RWPE1 (cell line): ENCODE measurements at regions of chr11 and their contacts with region 1.

Region 1: DNA sequence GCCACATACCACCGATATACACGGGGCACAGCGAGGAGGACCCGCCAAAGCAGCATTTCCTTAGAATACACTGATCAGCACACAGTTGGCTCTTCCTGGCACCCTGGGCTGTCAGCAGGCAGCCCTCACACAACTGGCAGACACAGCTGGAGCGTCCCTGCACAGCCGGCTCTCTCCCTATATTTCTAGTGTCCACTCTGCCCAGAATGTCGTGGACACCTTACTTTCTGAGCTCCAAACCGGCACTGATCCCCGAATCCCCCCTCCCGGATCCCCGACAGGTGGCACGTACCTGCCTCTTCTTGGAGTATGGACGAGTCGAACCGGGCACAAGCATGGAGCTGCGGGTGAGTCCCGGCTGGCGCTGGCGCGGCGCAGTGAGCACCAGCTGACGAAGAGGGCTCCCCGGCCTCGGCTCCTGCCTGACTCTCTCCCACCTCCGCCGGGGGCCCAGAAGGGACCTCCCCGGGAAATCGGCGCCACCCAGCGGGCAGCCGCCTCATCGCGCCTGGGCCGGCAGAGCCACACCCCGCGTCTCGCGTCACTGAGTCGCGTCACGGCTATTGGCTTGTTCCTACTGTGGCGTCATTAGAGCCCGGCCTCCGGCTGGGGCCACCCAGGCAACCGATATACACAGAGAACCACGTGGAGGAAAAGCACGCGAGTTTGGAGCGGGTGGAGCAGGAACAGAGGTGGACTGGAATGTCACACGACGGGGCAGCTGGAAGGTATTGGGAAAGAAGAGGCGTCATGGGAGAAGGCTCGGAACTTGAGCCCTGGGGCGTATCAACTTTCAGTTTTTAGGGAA is at the start of gene USP2:
- DNase-seq: peak; percentile 94
- H3K27ac ChIP-seq: peak within 1 kb of the TSS; percentile 53
- CTCF ChIP-seq: peak; percentile 96

Region 2: GRCh38 chr11:119356349-119357031 is 24.9 kb before region 1 on chr11:
- CTCF ChIA-PET with region 1: interaction called, 77 read pairs
- POLR2A ChIA-PET with region 1: no interaction called
- DNase-seq: no peak
- H3K27ac ChIP-seq: peak overlapping the region; percentile 75
- CTCF ChIP-seq: peak; percentile 96

Region 3: DNA sequence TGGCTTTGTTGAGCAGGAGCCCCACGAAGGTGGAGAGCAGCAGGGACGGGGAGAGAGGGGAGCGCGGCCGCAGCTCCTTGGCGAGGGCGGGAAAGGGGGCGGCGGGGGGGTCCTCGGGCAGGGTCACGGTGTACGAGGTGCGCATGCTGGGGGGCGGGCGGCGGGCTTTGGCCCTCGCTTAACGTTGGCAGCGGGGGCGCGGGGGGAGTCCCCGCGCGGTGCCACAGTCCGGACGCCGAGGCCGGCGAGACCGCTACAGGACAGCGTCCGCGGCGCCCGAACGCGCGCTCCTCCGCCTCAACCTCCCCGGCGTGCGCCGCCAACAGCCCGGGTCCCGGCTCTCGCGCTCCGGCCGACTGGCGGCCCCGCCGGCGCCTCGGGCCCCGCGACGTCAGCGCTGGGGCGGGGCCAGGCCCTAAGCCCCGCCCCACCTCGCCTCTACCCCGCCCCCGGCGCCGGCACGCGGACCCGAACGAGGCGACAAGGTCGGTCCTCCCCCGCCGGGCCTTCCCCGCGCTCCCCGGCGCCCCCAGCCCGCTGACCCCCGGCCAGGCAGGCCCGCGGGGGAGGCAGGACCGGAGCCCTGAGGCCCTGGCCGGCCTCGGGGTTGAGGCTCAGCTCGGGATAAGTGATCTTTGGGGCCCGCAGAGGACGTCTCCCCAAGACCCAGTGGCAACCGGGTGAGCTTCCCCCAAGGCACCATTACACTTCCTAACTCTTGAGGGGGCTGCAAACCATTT is 17.4 kb before region 1 on chr11:
- CTCF ChIA-PET with region 1: interaction called, 77 read pairs
- POLR2A ChIA-PET with region 1: no interaction called
- DNase-seq: peak; percentile 61
- H3K27ac ChIP-seq: peak overlapping the region; percentile 100
- CTCF ChIP-seq: no peak

Region 4: GRCh38 chr11:119404872-119405271 is 23.5 kb after region 1 on chr11:
- CTCF ChIA-PET with region 1: no interaction called
- POLR2A ChIA-PET with region 1: no interaction called
- DNase-seq: no peak
- H3K27ac ChIP-seq: no peak overlapping the region
- CTCF ChIP-seq: no peak

Region 5: GRCh38 chr11:119474682-119475596 is 93.6 kb after region 1 on chr11:
- CTCF ChIA-PET with region 1: interaction called, 19 read pairs
- POLR2A ChIA-PET with region 1: interaction called, 5 read pairs
- DNase-seq: peak; percentile 57
- H3K27ac ChIP-seq: peak overlapping the region; percentile 80
- CTCF ChIP-seq: peak; percentile 82

Region 6: DNA sequence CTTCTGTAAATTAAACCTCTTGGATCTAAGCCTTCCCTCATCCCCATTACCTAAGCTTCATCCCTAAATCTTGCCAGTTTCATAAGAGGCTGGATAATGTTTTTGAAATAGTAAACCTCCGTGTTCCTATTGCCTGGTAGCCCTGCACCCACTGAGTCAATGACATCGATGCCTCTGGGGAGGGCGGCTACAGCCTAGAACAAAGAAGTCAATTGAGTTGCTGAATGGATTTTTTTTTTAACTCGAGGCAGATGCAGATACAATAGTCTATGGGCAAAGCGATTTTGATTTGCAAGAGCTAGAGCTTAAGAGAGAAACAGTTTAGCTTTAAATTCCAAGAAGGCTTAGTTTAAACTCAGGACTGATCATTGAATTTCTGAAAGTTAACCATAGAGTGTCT is 226.3 kb after region 1 on chr11:
- CTCF ChIA-PET with region 1: no interaction called
- POLR2A ChIA-PET with region 1: no interaction called
- DNase-seq: no peak
- H3K27ac ChIP-seq: no peak overlapping the region
- CTCF ChIP-seq: no peak